ENCODE measurements at regions of chr11 and their contacts with region 1.

Region 1: GRCh38 chr11:86151174-86152005 is 82.5 kb upstream of the PICALM start:
- DNase-seq: peak; percentile 76 to 96 (median 86)
- ATAC-seq: peak; percentile 79
- H3K4me3 ChIP-seq: no peak overlapping the region; the same call in 1 of the 2 replicates
- H3K27ac ChIP-seq: peak overlapping the region; percentile 78
- H3K4me1 ChIP-seq: peaks cover 46 to 78% of the 10 kb centered on the region in 2 experiments
- H3K27me3 ChIP-seq: no peaks in the 10 kb centered on the region; a peak in 1 of 5 replicates
- CTCF ChIP-seq: peak in 2 of 3 experiments; percentile 7 to 24; a peak in 2 of 6 replicates
- EP300 ChIP-seq: peak; percentile 98
- POLR2A ChIP-seq: no peak
- RAD21 ChIP-seq: peak; percentile 17 to 56; a peak in 3 of 4 replicates

Region 2: GRCh38 chr11:86106916-86107315 is 44.5 kb before region 1 on chr11:
- CTCF ChIA-PET with region 1: no interaction called
- POLR2A ChIA-PET with region 1: no interaction called
- in situ Hi-C with region 1: no loop called
- intact Hi-C with region 1: loop called (anchors 5 kb)
- DNase-seq: no peak
- ATAC-seq: no peak
- H3K4me3 ChIP-seq: no peak overlapping the region
- H3K27ac ChIP-seq: no peak overlapping the region
- H3K4me1 ChIP-seq: peaks cover 3 to 6% of the 10 kb centered on the region in 2 experiments; a peak in 3 of 5 replicates
- H3K27me3 ChIP-seq: no peaks in the 10 kb centered on the region
- CTCF ChIP-seq: no peak
- EP300 ChIP-seq: no peak
- POLR2A ChIP-seq: no peak
- RAD21 ChIP-seq: no peak

Region 3: DNA sequence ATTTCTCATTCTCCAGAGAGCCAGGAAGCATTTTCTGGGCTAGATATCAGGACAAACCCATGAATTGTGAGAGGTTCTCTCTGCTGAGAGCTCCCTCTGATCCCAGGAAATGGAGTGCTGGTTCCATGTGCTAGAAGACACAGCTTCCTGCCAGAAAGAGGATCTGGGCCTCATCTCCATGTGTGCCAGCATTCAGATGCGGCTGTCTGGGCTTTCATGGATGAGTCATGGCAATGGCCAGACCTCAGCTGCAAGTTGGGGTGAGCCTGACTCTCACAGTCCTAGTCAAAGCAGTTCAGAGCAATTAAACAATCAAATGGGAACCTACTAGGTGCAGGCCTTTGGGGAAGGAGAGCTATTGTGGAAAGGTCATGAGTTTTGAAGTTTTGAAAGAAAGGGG is 10.8 kb after region 1 on chr11:
- CTCF ChIA-PET with region 1: no interaction called
- POLR2A ChIA-PET with region 1: interaction called, 18 read pairs
- in situ Hi-C with region 1: no loop called
- intact Hi-C with region 1: no loop called
- DNase-seq: peak in 3 of 4 experiments; percentile 41 to 67 (median 50)
- ATAC-seq: peak; percentile 33
- H3K4me3 ChIP-seq: no peak overlapping the region
- H3K27ac ChIP-seq: peak overlapping the region; percentile 80
- H3K4me1 ChIP-seq: peaks cover 32 to 78% of the 10 kb centered on the region in 2 experiments
- H3K27me3 ChIP-seq: no peaks in the 10 kb centered on the region
- CTCF ChIP-seq: no peak
- EP300 ChIP-seq: no peak
- POLR2A ChIP-seq: no peak
- RAD21 ChIP-seq: no peak

Region 4: GRCh38 chr11:86182976-86183584 is 31.7 kb after region 1 on chr11:
- CTCF ChIA-PET with region 1: no interaction called
- POLR2A ChIA-PET with region 1: no interaction called
- in situ Hi-C with region 1: no loop called
- intact Hi-C with region 1: loop called (anchors 2 kb)
- DNase-seq: peak; percentile 76 to 89 (median 84)
- ATAC-seq: peak; percentile 79
- H3K4me3 ChIP-seq: no peak overlapping the region
- H3K27ac ChIP-seq: peak overlapping the region; percentile 93
- H3K4me1 ChIP-seq: peaks cover 28 to 81% of the 10 kb centered on the region in 2 experiments
- H3K27me3 ChIP-seq: no peaks in the 10 kb centered on the region
- CTCF ChIP-seq: peak in 1 of 3 experiments; percentile 0; a peak in 1 of 6 replicates
- EP300 ChIP-seq: peak; percentile 71
- POLR2A ChIP-seq: peak; percentile 49
- RAD21 ChIP-seq: no peak; a peak in 2 of 4 replicates

Region 5: GRCh38 chr11:86440305-86440716 is 288.9 kb after region 1 on chr11:
- CTCF ChIA-PET with region 1: no interaction called
- POLR2A ChIA-PET with region 1: no interaction called
- in situ Hi-C with region 1: no loop called
- intact Hi-C with region 1: no loop called
- DNase-seq: no peak
- ATAC-seq: peak; percentile 40; the same call in 1 of the 3 replicates
- H3K4me3 ChIP-seq: no peak overlapping the region
- H3K27ac ChIP-seq: no peak overlapping the region
- H3K4me1 ChIP-seq: peaks cover 0 to 4% of the 10 kb centered on the region in 2 experiments; a peak in 2 of 5 replicates
- H3K27me3 ChIP-seq: no peaks in the 10 kb centered on the region
- CTCF ChIP-seq: no peak
- EP300 ChIP-seq: no peak
- POLR2A ChIP-seq: no peak
- RAD21 ChIP-seq: no peak